PC-9 (cell line): ENCODE measurements at regions of chr11 and their contacts with region 1.

Region 1: DNA sequence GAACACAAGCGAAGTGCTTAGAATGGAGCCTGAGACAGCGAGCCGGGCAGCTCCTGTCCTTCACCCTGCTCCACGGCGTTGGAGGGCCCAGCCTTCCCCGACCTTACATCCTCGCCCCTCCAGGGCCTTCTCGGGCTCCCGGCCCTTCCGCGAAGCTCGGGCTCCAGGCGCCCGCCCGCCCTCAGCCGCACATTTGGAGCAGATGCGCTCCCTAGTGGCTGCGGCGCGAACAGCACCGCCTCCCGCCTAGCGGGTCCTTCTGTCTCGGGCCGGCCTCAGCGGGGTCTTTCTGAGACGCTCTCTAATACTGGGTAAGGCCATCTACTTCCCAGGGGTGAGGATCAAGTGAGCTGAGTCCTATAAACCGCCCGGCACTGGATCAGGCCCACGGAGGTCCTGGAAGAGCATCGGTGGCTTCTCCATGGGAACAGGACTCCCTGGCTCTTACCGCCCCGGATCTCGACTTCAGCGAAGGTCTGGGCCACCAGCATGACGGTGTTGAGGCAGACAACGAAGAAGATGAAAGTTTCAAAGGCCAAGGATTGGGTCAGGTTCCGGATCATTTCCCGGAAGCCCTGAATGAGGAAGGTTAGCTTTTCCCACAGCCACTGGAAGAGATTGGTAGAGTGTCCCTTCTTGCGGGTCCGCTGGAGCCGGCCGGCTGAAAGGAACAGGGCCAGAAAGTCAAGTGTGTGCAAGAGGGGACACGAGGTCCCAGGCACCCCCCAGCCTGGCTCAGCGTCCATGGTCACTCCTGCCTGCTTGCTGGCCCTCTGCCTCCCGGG is 3.7 kb downstream of the CATSPER1 start:
- DNase-seq: peak; percentile 49 to 83
- H3K4me3 ChIP-seq: peak overlapping the region; percentile 21; the same call in 1 of the 2 replicates
- H3K27ac ChIP-seq: no peak overlapping the region
- H3K4me1 ChIP-seq: peaks cover 20% of the 10 kb centered on the region
- H3K27me3 ChIP-seq: no peaks in the 10 kb centered on the region
- CTCF ChIP-seq: peak; percentile 99

Region 2: DNA sequence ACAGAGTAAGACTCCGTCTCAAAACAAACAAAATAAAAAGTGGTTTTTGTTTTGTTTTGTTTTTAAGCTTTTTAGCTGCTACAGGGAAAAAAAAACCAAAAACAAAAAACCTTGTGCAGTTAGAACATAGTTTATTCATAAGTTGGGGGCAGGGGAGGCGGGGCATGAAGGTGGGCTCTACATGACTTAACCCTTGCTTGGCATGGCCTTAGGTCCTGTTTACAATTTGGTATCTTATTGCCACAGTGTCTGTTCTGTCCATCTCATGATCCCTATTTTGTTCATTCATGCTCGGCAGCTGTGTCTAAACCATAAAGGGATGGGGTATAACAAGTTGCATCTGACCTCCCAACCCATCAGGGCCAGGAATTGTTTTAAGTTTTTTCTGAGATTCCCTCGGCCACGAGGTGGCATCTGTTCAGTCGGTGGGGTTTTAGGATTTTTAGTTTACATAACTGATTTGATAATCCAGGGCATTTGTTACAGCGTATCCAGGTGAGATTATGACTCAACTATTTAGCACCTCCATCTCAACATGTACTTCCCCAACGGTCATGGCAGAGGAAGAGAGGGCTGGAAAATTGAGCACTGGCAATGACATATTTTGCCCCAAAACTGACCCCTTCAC is 248.7 kb before region 1 on chr11:
- CTCF ChIA-PET with region 1: interaction called, 19 read pairs
- POLR2A ChIA-PET with region 1: interaction called, 9 read pairs
- intact Hi-C with region 1: no loop called
- DNase-seq: no peak
- H3K4me3 ChIP-seq: no peak overlapping the region
- H3K27ac ChIP-seq: no peak overlapping the region
- H3K4me1 ChIP-seq: peaks cover 32% of the 10 kb centered on the region
- H3K27me3 ChIP-seq: no peaks in the 10 kb centered on the region
- CTCF ChIP-seq: no peak

Region 3: DNA sequence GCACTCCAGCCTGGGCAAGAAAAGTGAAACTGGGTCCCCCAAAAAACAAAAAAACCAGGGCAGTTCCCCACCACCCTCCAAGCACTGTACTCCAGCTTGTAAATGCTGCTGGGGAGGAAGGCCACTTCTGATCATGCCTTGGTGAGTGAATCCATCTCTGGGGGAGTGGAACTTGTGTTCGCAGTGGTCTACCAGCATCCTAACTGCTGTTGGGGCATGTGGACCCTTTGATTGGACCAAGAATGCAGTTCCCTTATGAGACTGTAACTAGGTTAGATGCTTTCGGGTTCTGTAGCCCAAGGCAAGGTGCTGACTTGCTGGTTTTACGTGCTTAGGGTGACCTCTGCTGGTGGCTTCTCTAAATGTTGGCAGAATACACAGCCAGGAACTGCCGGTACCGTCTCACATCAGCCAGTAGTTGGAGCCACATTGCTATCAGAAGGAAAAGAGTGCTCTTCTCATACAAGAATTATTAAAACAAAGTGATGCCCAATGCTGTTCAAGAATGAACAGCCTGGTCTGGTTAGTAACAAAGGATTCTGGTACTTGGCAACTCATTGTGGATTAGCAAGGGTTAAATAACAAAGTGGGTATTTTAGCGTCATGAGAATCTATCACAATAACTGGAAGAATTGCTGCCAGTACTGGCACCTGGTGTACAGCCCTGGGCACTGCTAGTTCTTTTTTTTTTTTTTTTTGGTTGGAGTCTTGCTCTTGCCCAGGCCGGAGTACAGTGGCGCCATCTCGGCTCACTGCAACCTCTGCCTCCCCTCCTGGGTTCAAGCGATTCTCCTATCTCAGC is 33.6 kb before region 1 on chr11:
- CTCF ChIA-PET with region 1: interaction called, 4 read pairs
- POLR2A ChIA-PET with region 1: no interaction called
- intact Hi-C with region 1: loop called (anchors 1 kb)
- DNase-seq: peak; percentile 87 to 92
- H3K4me3 ChIP-seq: no peak overlapping the region
- H3K27ac ChIP-seq: no peak overlapping the region
- H3K4me1 ChIP-seq: peaks cover 4% of the 10 kb centered on the region; the same call in 1 of the 2 replicates
- H3K27me3 ChIP-seq: no peaks in the 10 kb centered on the region
- CTCF ChIP-seq: peak; percentile 99

Region 4: GRCh38 chr11:66035653-66036333 is 13.2 kb after region 1 on chr11:
- CTCF ChIA-PET with region 1: interaction called, 10 read pairs
- POLR2A ChIA-PET with region 1: no interaction called
- intact Hi-C with region 1: no loop called
- DNase-seq: no peak
- H3K4me3 ChIP-seq: no peak overlapping the region
- H3K27ac ChIP-seq: no peak overlapping the region
- H3K4me1 ChIP-seq: no peaks in the 10 kb centered on the region
- H3K27me3 ChIP-seq: no peaks in the 10 kb centered on the region
- CTCF ChIP-seq: no peak

Region 5: GRCh38 chr11:66069715-66070603 is 47.4 kb after region 1 on chr11 and contains the start of gene PACS1:
- CTCF ChIA-PET with region 1: no interaction called
- POLR2A ChIA-PET with region 1: no interaction called
- intact Hi-C with region 1: no loop called
- DNase-seq: peak in 1 of 2 experiments; percentile 73
- H3K4me3 ChIP-seq: peak within 1 kb of the TSS; percentile 72
- H3K27ac ChIP-seq: no peak within 1 kb of the TSS
- H3K4me1 ChIP-seq: peaks cover 22% of the 10 kb centered on the region
- H3K27me3 ChIP-seq: no peaks in the 10 kb centered on the region
- CTCF ChIP-seq: no peak
- total RNA-seq, gene PACS1: 100 and 102 TPM in 2 replicates

Region 6: GRCh38 chr11:66081505-66081904 is 58.9 kb after region 1 on chr11:
- CTCF ChIA-PET with region 1: no interaction called
- POLR2A ChIA-PET with region 1: interaction called, 10 read pairs
- intact Hi-C with region 1: no loop called
- DNase-seq: peak; percentile 79 to 94
- H3K4me3 ChIP-seq: peak overlapping the region; percentile 42; the same call in 1 of the 2 replicates
- H3K27ac ChIP-seq: peak overlapping the region; percentile 57
- H3K4me1 ChIP-seq: peaks cover 42% of the 10 kb centered on the region
- H3K27me3 ChIP-seq: no peaks in the 10 kb centered on the region
- CTCF ChIP-seq: no peak

Region 7: DNA sequence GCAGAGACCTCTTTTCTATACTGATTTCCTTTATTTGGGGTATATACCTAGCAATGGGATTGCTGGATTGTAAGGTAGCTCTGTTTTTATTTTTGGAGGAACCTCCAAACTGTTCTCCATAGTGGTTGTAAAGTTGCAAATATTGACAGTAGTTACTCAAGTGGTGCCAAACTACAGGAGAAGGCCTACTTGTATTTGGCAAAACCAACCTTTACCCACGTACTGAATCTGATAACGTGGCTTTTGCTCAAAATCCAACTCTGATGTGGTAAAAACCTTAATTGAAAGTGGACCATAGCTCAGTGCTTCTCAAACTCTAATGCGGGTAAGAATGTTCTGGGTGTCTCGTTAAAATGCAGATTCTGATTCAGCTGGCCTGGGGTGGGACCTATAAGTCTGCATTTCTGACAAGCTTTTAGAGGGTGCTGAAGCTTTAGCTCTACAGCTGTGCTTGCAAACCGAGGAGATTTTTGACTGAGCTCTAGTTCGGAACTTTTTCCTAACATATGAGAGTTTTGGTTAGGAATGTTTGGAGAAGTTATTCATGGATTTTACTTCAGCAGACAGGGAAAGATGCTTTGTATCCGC is 117.3 kb after region 1 on chr11:
- CTCF ChIA-PET with region 1: no interaction called
- POLR2A ChIA-PET with region 1: no interaction called
- intact Hi-C with region 1: no loop called
- DNase-seq: no peak
- H3K4me3 ChIP-seq: no peak overlapping the region
- H3K27ac ChIP-seq: no peak overlapping the region
- H3K4me1 ChIP-seq: peaks cover 38% of the 10 kb centered on the region
- H3K27me3 ChIP-seq: no peaks in the 10 kb centered on the region
- CTCF ChIP-seq: no peak

Region 8: GRCh38 chr11:66150140-66150539 is 127.5 kb after region 1 on chr11:
- CTCF ChIA-PET with region 1: no interaction called
- POLR2A ChIA-PET with region 1: no interaction called
- intact Hi-C with region 1: no loop called
- DNase-seq: no peak
- H3K4me3 ChIP-seq: no peak overlapping the region
- H3K27ac ChIP-seq: no peak overlapping the region
- H3K4me1 ChIP-seq: no peaks in the 10 kb centered on the region
- H3K27me3 ChIP-seq: no peaks in the 10 kb centered on the region
- CTCF ChIP-seq: no peak

Region 9: DNA sequence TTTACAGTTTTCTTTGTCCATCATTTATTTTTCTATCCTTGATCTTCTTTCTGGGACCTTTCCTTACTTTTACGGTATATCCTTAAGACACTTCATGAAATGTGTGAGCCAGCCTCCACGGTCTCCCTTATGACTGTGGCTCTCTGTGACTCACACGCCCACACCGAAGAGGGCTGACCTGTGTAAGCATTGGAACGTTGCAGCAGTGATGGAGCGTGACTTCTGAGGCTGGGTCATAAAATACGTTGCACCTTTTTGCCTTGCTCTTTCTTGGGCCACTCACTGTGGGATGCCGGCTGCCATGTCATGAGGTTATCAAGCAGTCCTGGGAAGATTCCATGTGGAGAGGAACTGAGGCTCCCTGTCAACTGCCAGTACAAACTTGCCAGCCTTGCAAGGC is 149.6 kb after region 1 on chr11:
- CTCF ChIA-PET with region 1: no interaction called
- POLR2A ChIA-PET with region 1: interaction called, 15 read pairs
- intact Hi-C with region 1: no loop called
- DNase-seq: no peak
- H3K4me3 ChIP-seq: no peak overlapping the region
- H3K27ac ChIP-seq: no peak overlapping the region
- H3K4me1 ChIP-seq: no peaks in the 10 kb centered on the region
- H3K27me3 ChIP-seq: no peaks in the 10 kb centered on the region
- CTCF ChIP-seq: no peak

Region 10: GRCh38 chr11:66744485-66745340 is 722.1 kb after region 1 on chr11:
- CTCF ChIA-PET with region 1: no interaction called
- POLR2A ChIA-PET with region 1: interaction called, 10 read pairs
- intact Hi-C with region 1: no loop called
- DNase-seq: peak; percentile 74 to 93
- H3K4me3 ChIP-seq: peak overlapping the region; percentile 99
- H3K27ac ChIP-seq: peak overlapping the region; percentile 79
- H3K4me1 ChIP-seq: peaks cover 41% of the 10 kb centered on the region
- H3K27me3 ChIP-seq: no peaks in the 10 kb centered on the region
- CTCF ChIP-seq: no peak